GM18951 (cell line): ENCODE measurements at regions of chr12 and their contacts with region 1.

Region 1: DNA sequence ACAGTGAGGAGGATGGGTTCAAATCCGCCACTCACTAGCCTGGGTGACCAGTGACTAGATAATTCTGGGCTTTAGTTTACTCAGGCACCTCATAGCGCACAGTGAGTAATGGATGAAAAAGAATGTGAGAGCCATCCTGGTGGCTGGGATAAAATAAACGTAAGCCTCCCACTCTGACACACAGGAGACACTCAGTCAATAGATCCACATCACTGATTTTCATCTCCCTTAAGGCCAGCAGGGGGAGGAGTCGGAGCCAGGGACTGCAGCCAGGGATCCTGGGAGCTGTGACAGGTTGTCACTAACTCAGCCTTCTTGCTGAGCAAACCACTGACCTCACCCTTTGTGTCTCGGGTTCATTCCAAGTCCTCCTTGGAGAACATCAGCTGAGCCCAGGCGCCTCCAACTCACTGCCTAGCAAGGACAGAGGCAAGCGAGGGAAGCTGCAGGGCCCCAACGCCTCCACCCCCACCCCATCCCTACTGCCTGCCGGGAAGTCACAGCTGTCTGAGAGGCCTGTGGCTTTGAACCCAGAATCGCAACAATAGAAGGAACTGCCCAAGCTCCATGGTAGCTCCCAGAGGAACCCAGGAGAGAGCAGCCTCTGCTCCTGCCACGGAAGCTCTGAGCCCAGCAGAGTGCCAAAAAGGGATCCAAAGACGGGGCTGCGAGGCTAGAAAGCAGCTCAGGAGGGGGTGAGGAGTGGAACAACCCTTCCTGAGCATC is 30.7 kb downstream of the PXN start:
- POLR2A ChIP-seq: no peak

Region 2: GRCh38 chr12:119885549-119885948 is 349.3 kb before region 1 on chr12:
- in situ Hi-C with region 1: no loop called
- POLR2A ChIP-seq: no peak

Region 3: GRCh38 chr12:120265473-120266179 is 30.8 kb after region 1 on chr12 and contains the start of gene PXN:
- in situ Hi-C with region 1: loop called (anchors 5 kb)
- POLR2A ChIP-seq: peak; percentile 64